ENCODE measurements at regions of chr1 and their contacts with region 1.

Region 1: GRCh38 chr1:227372726-227373130 is 54.4 kb upstream of the CDC42BPA start:
- DNase-seq: peak in 1 of 3 donors; percentile 22
- ATAC-seq: no peak
- H3K4me3 ChIP-seq: no peak overlapping the region
- H3K4me1 ChIP-seq: no peaks in the 10 kb centered on the region
- CTCF ChIP-seq: no peak

Region 2: GRCh38 chr1:227197064-227197463 is 175.7 kb before region 1 on chr1:
- intact Hi-C with region 1: loop called in 1 of 2 experiments (anchors 5 kb)
- DNase-seq: no peak
- ATAC-seq: no peak
- H3K4me3 ChIP-seq: no peak overlapping the region
- H3K4me1 ChIP-seq: no peaks in the 10 kb centered on the region
- CTCF ChIP-seq: no peak

Measured in mucosa of descending colon (tissue), 3 donors.